Aorta (tissue), 5 donors: ENCODE measurements at regions of chr14 and their contacts with region 1.

Region 1: DNA sequence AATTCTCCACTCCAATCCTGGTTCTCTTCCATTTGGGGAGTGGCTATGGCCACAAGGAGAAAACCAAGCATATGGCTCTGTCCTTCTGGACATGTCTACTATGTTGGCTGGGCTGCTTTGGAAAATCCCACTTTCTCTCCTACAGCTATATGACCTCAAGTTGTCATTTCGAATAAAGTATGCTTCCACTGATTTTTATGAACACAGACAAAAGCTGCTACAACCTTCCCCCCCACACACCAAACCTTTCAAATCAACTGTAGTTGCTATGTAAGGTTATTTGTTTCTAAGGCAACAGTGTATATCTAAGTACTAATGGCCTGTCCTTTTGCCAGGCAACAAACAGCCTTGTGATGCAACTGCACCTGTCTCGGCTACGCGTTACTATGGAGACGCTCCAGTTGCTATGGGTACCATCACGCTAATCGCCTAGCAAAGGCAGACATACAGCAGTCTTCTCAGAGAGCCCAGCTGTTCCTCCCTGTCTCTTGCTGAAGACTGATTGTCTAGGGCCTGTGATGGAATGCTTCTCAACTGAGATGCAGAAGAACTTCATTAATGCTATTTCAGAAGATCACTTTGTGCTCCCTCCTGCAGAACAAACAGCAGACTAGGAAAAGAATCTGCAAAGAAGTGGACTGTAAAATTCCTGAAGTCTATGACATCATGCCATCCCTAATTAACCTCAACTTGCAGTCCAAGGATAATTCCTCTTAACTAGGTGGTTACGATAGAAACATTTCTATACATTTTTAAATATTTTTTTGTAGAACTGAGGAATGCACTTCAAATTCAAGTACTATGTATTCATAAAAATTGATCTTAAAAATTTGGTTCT is 67.6 kb downstream of the FOXN3 start:
- DNase-seq: no peak
- ATAC-seq: no peak
- H3K4me3 ChIP-seq: no peak overlapping the region
- H3K27ac ChIP-seq: no peak overlapping the region
- H3K4me1 ChIP-seq: peaks cover 3 to 5% of the 10 kb centered on the region in 2 donors
- H3K27me3 ChIP-seq: no peaks in the 10 kb centered on the region

Region 2: GRCh38 chr14:89303457-89304435 is 45.6 kb before region 1 on chr14:
- intact Hi-C with region 1: loop called in 1 of 2 experiments (anchors 5 kb)
- DNase-seq: peak; percentile 82 to 90
- ATAC-seq: peak; percentile 84
- H3K4me3 ChIP-seq: peak overlapping the region in 1 of 2 donors; percentile 3
- H3K27ac ChIP-seq: peak overlapping the region; percentile 87 to 96
- H3K4me1 ChIP-seq: peaks cover 3 to 4% of the 10 kb centered on the region in 2 donors
- H3K27me3 ChIP-seq: no peaks in the 10 kb centered on the region